Heart right ventricle (tissue), 16 donors: ENCODE measurements at regions of chr3 and their contacts with region 1.

Region 1: DNA sequence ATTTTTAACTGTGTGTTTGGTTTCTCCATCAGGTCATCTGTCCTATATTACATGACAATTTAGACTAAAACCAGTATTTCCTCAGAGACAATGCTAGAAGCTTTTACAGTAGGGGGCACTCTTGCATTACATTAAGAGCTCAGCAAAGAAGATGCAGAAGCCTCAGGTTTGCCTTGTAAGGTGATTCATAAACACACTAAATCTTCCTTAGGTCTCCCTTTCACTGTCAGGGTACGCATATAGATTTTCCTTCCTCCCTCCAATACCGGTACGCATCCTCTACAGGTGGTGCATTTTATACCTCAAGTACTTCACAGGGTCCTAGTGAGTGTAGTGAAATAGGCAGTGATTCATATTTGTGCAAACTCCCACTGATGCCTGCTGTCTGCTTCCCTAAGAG is 46.5 kb downstream of the CD86 start:
- DNase-seq: no peak
- ATAC-seq: no peak
- H3K4me3 ChIP-seq: no peak overlapping the region
- H3K27ac ChIP-seq: no peak overlapping the region
- H3K4me1 ChIP-seq: peaks cover 0 to 3% (median 0%) of the 10 kb centered on the region in 9 donors
- H3K27me3 ChIP-seq: peaks cover 0 to 12% (median 0%) of the 10 kb centered on the region in 7 donors
- CTCF ChIP-seq: peak in 7 of 9 donors; percentile 6 to 51 (median 44)

Region 2: DNA sequence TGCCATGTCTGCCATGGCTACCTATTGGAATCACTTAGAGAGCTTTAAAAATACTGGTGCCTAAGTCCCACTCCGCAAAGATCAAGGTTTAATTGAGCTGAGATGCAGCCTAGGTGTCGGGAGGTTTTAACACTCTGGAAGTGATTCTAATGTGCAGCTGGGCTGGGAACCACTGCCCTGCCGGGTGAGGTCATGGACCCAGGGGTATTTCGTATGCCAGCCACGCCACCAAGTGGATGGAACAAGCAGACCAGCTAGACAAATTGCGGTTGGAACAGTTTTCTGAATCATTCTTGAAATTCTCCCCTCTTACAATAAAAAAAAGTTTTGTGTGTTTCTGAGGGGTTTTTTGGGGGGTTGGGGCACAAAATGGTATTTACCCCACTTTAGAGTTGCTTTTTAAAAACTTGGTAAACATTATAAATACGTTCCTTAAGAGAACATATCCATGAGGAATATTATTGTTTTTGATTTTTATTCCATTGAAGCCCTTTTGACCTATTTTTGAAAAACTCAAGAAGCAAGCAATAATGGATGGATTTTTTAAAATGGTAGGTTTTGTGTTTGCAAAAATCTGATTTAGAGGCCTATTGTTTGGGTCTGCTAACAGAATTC is 157.2 kb after region 1 on chr3:
- intact Hi-C with region 1: loop called in 3 of 10 experiments (anchors 5 to 10 kb)
- DNase-seq: peak; percentile 56 to 63
- ATAC-seq: peak; percentile 81 to 98 (median 86)
- H3K4me3 ChIP-seq: no peak overlapping the region
- H3K27ac ChIP-seq: no peak overlapping the region
- H3K4me1 ChIP-seq: peaks cover 0 to 32% (median 0%) of the 10 kb centered on the region in 9 donors
- H3K27me3 ChIP-seq: peaks cover 0 to 13% (median 0%) of the 10 kb centered on the region in 7 donors
- CTCF ChIP-seq: peak; percentile 23 to 72 (median 60)

Region 3: GRCh38 chr3:122268257-122269024 is 166.8 kb after region 1 on chr3:
- intact Hi-C with region 1: loop called in 1 of 10 experiments (anchors 5 kb)
- DNase-seq: no peak
- ATAC-seq: no peak
- H3K4me3 ChIP-seq: no peak overlapping the region
- H3K27ac ChIP-seq: no peak overlapping the region
- H3K4me1 ChIP-seq: peaks cover 0 to 22% (median 0%) of the 10 kb centered on the region in 9 donors
- H3K27me3 ChIP-seq: peaks cover 0 to under 1% (median 0%) of the 10 kb centered on the region in 7 donors
- CTCF ChIP-seq: no peak